Activated CD4-positive, alpha-beta T cell treated with anti-CD3 and anti-CD28 coated beads, Interleukin-2, amount 10 ng/mL, durations not matched to agents 24 days and 14 days (primary cell): ENCODE measurements at regions of chr2 and their contacts with region 1.

Region 1: DNA sequence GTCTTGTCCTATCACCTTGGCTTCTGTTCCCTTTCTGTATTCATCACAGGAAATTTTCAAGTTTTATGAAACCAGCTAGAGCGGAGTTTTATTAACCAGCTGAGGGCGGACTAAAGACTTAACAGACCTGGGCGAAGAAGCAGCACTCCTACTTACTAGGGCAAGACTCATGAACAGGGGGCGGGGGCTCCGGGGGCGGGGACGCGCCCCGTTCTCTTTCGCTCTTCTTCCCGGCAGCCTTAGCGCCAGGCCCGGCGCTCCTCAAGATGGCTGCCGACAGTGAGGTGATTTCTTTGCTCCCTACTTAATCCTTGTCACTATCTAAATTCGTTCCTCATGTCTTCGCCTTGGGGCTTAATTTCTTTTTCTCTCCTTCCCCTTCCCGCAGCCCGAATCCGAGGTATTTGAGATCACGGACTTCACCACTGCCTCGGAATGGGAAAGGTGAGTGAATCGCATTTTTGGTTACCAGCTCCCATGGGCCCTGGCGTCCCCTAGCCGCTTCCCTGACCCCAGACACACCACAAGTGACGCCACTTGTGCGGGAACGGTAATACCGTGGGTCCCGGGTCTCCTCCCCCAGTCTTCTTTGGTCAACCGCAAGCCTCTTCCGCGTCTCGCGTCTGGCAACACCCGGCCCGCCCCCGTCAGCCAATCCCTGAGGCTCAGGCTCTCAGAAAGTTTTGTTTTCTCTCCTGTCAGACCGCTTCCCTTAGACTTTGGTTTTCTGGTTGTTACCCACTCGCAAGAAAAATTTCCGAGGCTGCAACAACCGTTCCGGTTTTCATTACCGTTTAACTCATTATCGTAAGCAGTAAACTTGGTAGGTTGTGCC is at the start of gene RAB3GAP1:
- DNase-seq: peak; percentile 98
- H3K4me3 Mint-ChIP-seq: peak within 1 kb of the TSS; percentile 94
- H3K27ac Mint-ChIP-seq: peak within 1 kb of the TSS; percentile 100
- H3K4me1 Mint-ChIP-seq: peaks cover 38% of the 10 kb centered on the region
- H3K27me3 Mint-ChIP-seq: peaks cover 2% of the 10 kb centered on the region
- total RNA-seq, gene RAB3GAP1: 24.2 and 26.3 TPM in 2 replicates

Region 2: DNA sequence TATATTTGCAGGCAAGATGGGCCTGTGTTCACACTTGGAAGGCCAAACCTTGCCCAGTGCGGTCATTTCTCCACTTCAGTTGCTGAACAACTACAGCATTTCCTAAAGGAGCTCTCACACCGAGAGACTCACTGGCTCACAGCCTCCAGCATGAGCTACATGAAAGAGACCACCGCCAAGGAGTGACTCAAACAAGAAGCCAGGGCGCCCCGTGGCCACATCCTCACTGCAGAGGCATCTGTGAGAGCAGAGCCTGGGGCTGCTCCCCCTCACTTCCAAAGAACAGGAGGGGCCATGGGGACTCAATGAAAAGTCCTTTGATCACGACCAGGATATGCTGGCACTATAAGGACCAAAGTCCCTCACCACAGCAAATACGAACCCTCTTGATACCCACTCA is 383.4 kb before region 1 on chr2:
- intact Hi-C with region 1: loop called (anchors 10 kb)
- DNase-seq: peak; percentile 94
- H3K4me3 Mint-ChIP-seq: peak overlapping the region; percentile 61
- H3K27ac Mint-ChIP-seq: peak overlapping the region; percentile 46
- H3K4me1 Mint-ChIP-seq: peaks cover 62% of the 10 kb centered on the region
- H3K27me3 Mint-ChIP-seq: peaks cover 40% of the 10 kb centered on the region

Region 3: DNA sequence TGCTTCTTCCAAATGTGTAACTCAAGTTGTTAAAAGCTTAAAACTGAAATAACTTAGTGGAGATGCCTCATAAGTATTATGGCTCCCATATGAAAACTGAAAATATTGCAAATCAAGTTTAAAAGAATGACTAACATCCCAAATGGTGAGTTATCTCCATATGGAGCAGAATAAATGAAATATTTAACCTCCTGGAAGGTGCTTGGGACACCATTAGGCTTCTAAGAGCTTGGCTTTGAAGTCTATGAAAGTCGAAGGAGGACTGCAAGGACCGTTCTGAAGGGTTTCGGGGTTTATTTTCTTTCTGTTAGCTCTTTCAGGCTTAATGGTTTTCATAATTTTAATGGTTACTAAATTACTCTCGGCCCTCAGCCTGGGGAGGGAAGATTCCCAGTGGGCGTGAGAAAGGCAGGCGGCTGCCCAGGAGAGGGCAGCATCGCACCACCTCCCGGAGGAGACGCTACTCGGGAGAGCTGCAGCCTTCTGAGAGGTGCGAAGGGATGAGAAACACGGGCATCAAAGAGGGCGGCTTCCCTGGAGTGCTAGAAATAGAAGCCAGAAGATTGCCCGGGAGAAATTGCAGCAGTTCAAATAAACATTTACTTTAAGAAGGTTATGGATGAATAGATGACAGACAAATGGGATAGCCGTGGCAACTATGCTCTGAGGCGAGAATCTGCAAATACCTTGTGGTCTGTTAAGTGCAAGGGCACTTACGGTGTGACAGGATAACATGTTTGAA is 48.1 kb before region 1 on chr2:
- intact Hi-C with region 1: loop called (anchors 2 kb)
- DNase-seq: peak; percentile 91
- H3K4me3 Mint-ChIP-seq: peak overlapping the region; percentile 30
- H3K27ac Mint-ChIP-seq: no peak overlapping the region
- H3K4me1 Mint-ChIP-seq: peaks cover 5% of the 10 kb centered on the region
- H3K27me3 Mint-ChIP-seq: peaks cover 21% of the 10 kb centered on the region

Region 4: DNA sequence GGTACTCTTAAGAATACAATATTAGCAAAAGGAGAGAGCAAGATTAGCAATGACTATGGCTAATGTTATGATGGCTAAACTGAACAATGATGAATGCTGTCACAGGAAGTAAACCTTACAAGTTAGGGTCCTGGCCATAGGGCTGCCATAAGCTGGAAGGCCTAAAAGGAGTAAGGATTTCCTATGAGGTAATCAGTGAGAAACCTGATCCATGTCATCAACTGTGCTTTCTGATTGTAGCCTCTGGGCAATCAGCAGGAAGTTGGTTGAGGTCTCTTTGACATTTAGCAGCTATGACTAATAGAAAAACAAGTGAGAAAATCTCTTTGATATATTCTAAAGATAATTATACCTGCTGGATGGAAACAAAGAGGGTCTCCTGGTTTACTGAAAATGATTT is 192.8 kb after region 1 on chr2:
- intact Hi-C with region 1: loop called (anchors 1 kb)
- DNase-seq: peak; percentile 71
- H3K4me3 Mint-ChIP-seq: no peak overlapping the region
- H3K27ac Mint-ChIP-seq: peak overlapping the region; percentile 86
- H3K4me1 Mint-ChIP-seq: peaks cover 22% of the 10 kb centered on the region
- H3K27me3 Mint-ChIP-seq: no peaks in the 10 kb centered on the region

Region 5: GRCh38 chr2:135664623-135665068 is 612.4 kb after region 1 on chr2:
- intact Hi-C with region 1: loop called (anchors 1 kb)
- DNase-seq: no peak
- H3K4me3 Mint-ChIP-seq: no peak overlapping the region
- H3K27ac Mint-ChIP-seq: peak overlapping the region; percentile 79
- H3K4me1 Mint-ChIP-seq: peaks cover 31% of the 10 kb centered on the region
- H3K27me3 Mint-ChIP-seq: no peaks in the 10 kb centered on the region

Region 6: DNA sequence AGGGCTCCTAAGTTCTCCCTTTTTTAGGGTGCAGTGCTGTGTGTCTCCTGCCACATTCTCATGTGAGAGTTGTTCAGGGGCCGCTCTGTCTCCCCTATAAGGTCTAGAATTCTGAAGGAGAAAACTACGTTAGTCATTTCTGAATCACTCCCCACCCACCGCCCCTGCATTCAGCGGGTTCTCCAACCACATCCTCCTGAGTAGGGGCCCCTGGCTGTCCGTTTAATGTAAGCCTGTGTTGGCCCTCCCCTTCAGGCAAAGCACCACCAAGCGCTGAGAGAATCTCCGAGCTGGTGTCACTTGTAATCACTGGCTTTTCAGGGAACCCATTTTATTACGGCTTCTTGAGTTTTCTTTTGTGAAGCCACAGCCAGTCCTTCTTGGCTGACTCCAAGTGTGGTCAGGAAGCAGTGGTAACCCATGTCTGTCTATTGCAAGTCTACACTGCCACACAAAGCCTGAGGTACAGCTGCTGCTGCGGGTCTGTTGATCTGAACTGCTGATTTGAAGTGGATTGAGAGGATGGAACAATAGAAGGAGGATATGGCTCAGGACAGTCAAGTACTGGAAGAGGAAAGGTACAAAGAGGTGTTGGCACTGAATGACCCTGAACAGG is 767.9 kb after region 1 on chr2:
- intact Hi-C with region 1: loop called (anchors 1 kb)
- DNase-seq: peak; percentile 93
- H3K4me3 Mint-ChIP-seq: peak overlapping the region; percentile 74
- H3K27ac Mint-ChIP-seq: peak overlapping the region; percentile 83
- H3K4me1 Mint-ChIP-seq: peaks cover 44% of the 10 kb centered on the region
- H3K27me3 Mint-ChIP-seq: no peaks in the 10 kb centered on the region

Region 7: GRCh38 chr2:136327162-136327852 is 1275.0 kb after region 1 on chr2:
- intact Hi-C with region 1: loop called (anchors 5 kb)
- DNase-seq: peak; percentile 91
- H3K4me3 Mint-ChIP-seq: peak overlapping the region; percentile 74
- H3K27ac Mint-ChIP-seq: peak overlapping the region; percentile 92
- H3K4me1 Mint-ChIP-seq: peaks cover 49% of the 10 kb centered on the region
- H3K27me3 Mint-ChIP-seq: no peaks in the 10 kb centered on the region